ENCODE measurements at regions of chr20 and their contacts with region 1.

Region 1: DNA sequence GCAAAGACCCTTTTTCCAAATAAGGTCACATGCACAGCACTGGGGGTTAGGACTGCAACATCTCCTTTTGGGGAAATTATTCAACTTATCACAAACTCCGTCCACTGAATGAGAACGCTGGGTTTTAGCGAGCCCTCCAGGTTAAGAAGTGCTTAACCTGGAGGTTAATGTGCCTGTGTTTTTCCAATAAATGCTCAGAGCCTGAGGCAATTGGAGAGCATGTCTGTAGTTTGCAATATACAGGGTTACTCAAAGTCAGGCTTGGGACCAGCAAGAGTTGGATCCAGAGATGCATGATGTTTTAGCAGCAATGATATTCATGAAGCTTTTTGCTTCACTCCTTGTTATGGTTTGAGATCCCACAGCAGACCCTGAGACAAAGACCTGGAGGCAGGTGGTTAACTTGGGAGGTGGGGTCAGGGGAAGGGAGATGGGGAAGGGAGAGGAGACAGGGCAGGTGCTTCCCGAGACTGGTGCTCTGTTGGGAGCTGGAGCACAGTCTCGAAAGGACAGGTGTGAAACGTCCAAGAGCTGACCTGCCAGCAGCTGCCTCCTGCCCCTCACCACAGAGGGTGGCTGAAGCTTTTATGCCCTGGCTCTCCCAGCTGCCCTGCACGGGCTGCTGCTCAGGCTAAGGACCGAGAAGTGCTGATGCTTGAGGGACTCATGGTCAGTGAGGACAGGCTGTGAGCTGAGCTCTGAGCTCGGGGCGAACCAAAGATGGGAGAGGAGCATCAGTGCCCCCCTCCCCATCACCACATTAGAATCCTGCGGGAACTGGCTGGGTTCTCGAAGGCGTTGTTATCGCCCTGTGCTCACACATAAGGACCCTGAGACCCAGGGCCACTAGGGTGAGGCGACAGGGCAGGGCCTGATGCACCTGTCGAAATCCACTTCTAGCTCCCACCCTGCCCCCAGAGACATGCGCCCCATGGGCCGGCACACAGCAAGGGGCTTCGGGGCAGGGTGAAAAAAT is 25.1 kb upstream of the CD93 start:
- DNase-seq: no peak
- ATAC-seq: no peak
- H3K4me3 ChIP-seq: no peak overlapping the region
- H3K4me3 Mint-ChIP-seq: no peak overlapping the region
- H3K27ac ChIP-seq: no peak overlapping the region
- H3K27ac Mint-ChIP-seq: no peak overlapping the region
- H3K4me1 ChIP-seq: no peaks in the 10 kb centered on the region
- H3K4me1 Mint-ChIP-seq: peaks cover 0 to 6% (median 0%) of the 10 kb centered on the region in 7 donors
- H3K27me3 ChIP-seq: no peaks in the 10 kb centered on the region
- H3K27me3 Mint-ChIP-seq: peaks cover 0 to 11% (median 0%) of the 10 kb centered on the region in 5 donors

Region 2: GRCh38 chr20:23078351-23079015 is 32.8 kb before region 1 on chr20:
- CTCF ChIA-PET with region 1: no interaction called
- POLR2A ChIA-PET with region 1: no interaction called
- intact Hi-C with region 1: loop called in 1 of 2 experiments (anchors 1 kb)
- DNase-seq: no peak
- ATAC-seq: no peak
- H3K4me3 ChIP-seq: no peak overlapping the region
- H3K4me3 Mint-ChIP-seq: no peak overlapping the region
- H3K27ac ChIP-seq: no peak overlapping the region
- H3K27ac Mint-ChIP-seq: no peak overlapping the region
- H3K4me1 ChIP-seq: no peaks in the 10 kb centered on the region
- H3K4me1 Mint-ChIP-seq: peaks cover 0 to 11% (median 0%) of the 10 kb centered on the region in 7 donors
- H3K27me3 ChIP-seq: no peaks in the 10 kb centered on the region
- H3K27me3 Mint-ChIP-seq: peaks cover 0 to 15% (median 0%) of the 10 kb centered on the region in 5 donors

Region 3: DNA sequence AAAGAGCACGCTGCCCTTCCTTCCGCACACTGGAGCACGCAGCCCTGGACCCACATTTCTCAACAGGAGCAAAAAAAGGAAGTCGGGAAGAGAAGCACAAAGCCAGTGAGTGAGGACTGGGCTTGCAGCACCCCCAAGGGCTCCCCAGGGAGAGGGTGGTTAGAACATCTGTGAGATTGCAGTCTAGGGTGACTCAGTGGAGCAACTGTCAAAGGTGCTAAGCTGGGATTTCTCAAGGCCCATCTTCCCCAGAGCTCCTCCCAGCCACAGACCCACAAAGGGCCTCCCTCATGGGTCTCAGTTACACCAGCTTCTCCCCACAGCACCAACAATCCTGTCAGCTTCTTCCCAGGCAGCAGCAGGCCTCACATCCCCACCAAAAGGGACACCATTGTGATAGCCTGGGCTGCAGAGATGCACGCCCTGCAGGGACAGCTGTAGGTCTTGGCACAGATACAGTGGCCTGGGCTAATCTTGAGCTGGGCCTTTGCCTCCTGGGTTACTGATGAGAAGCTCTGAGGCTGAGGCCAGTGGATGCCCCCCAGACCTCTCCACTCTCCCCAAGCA is 14.4 kb after region 1 on chr20:
- CTCF ChIA-PET with region 1: no interaction called
- POLR2A ChIA-PET with region 1: no interaction called
- intact Hi-C with region 1: no loop called
- DNase-seq: no peak
- ATAC-seq: peak; percentile 82
- H3K4me3 ChIP-seq: no peak overlapping the region
- H3K4me3 Mint-ChIP-seq: no peak overlapping the region
- H3K27ac ChIP-seq: no peak overlapping the region
- H3K27ac Mint-ChIP-seq: no peak overlapping the region
- H3K4me1 ChIP-seq: no peaks in the 10 kb centered on the region
- H3K4me1 Mint-ChIP-seq: peaks cover 0 to 13% (median 0%) of the 10 kb centered on the region in 7 donors
- H3K27me3 ChIP-seq: no peaks in the 10 kb centered on the region
- H3K27me3 Mint-ChIP-seq: peaks cover 0 to 9% (median 6%) of the 10 kb centered on the region in 5 donors

Region 4: DNA sequence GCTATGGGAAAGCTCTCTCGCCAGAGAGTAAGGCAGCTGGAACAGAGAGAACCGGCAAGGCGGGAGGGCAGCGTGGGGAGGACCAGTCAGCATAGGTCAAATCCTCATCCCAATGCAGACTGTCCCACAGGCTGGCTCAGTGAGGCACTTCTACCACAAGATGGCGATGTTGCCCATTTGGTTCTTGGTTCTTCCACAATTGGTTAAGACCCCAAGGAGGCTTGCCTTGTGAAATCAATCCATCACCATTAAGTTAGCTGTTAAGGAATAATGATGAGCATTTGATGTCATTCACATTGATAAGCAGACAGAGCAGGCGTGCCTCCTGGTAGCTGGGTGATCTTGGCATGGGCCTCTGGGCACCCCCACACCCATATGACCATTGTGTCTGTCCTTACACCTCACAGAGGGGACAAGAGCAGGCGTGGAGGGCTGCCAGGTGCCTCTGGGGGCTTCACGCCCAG is 330.6 kb after region 1 on chr20:
- CTCF ChIA-PET with region 1: no interaction called
- POLR2A ChIA-PET with region 1: no interaction called
- intact Hi-C with region 1: no loop called
- DNase-seq: peak in 8 of 9 donors; percentile 15 to 49 (median 29)
- ATAC-seq: peak; percentile 81
- H3K4me3 ChIP-seq: no peak overlapping the region
- H3K4me3 Mint-ChIP-seq: no peak overlapping the region
- H3K27ac ChIP-seq: no peak overlapping the region
- H3K27ac Mint-ChIP-seq: no peak overlapping the region
- H3K4me1 ChIP-seq: no peaks in the 10 kb centered on the region
- H3K4me1 Mint-ChIP-seq: peaks cover 0 to 4% (median 0%) of the 10 kb centered on the region in 7 donors
- H3K27me3 ChIP-seq: no peaks in the 10 kb centered on the region
- H3K27me3 Mint-ChIP-seq: peaks cover 0 to 2% (median 0%) of the 10 kb centered on the region in 5 donors